H1 (cell line): ENCODE measurements at regions of chr15 and their contacts with region 1.

Region 1: DNA sequence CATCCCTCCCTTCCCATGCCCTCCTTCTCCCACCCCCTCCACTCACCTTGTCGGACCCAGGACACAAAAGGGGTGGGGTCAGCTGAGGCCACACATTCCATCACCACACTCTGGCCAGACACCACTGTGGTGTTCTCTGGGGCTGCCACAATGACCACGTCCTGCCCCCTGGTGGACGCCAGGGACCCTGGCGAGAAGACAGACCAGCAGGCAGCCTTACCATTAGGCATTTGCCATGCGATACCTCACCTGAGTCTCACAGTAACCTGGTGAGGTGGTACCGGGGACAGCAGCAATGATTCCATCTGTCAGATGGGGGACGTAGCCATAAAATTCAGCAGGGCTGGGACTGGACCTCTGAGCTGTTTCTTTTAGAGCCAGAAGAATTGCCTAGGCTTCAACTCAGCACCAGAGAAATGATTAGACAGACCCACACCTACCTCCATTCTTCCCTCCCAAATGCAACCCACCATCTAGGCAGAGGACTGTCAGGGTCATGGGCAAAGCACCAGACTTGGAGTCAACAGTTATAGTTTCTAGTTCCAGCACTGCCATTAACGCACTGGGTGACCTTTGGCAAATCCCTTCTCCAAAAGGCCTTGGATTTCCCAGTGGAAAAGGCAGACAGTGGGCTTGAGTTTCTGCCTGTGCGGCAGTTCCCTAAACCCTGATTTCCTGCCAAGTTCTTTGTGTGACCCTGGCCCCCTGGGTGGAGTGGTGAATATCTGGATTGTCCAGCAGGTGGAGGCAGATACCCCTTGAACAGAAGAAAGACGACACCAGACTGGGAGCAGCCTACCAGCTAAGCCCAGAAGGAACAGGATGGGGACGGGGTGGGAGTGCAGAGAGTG is 21.8 kb downstream of the IGDCC4 start:
- DNase-seq: peak; percentile 78 to 94
- H3K4me3 ChIP-seq: peak overlapping the region in 1 of 4 experiments; percentile 18; a peak in 1 of 8 replicates
- H3K27ac ChIP-seq: no peak overlapping the region
- H3K4me1 ChIP-seq: peaks cover 7 to 30% (median 19%) of the 10 kb centered on the region in 4 experiments
- H3K27me3 ChIP-seq: peaks cover 10 to 24% (median 19%) of the 10 kb centered on the region in 4 experiments
- CTCF ChIP-seq: peak; percentile 91 to 95 (median 91)
- EP300 ChIP-seq: 0 out of 3 replicates have a peak, but pooled peaks of 1 of the 2 experiments have one; percentile 44
- POLR2A ChIP-seq: no peak
- RAD21 ChIP-seq: peak; percentile 94 to 99

Region 2: GRCh38 chr15:65318870-65319356 is 82.1 kb before region 1 on chr15:
- CTCF ChIA-PET with region 1: interaction called, 547 read pairs
- POLR2A ChIA-PET with region 1: interaction called, 4 read pairs
- DNase-seq: peak in 1 of 2 experiments; percentile 90
- H3K4me3 ChIP-seq: no peak overlapping the region
- H3K27ac ChIP-seq: no peak overlapping the region
- H3K4me1 ChIP-seq: no peaks in the 10 kb centered on the region
- H3K27me3 ChIP-seq: 0 out of 7 replicates have a peak, but pooled peaks cover 0 to 3% (median 0%) of the 10 kb centered on the region in 4 experiments
- CTCF ChIP-seq: peak; percentile 62 to 98 (median 92)
- EP300 ChIP-seq: no peak
- POLR2A ChIP-seq: no peak
- RAD21 ChIP-seq: peak; percentile 99 to 100

Region 3: GRCh38 chr15:65377104-65377975 is 23.6 kb before region 1 on chr15:
- CTCF ChIA-PET with region 1: interaction called, 19 read pairs
- POLR2A ChIA-PET with region 1: interaction called, 5 read pairs
- DNase-seq: peak in 1 of 2 experiments; percentile 83
- H3K4me3 ChIP-seq: peak overlapping the region; percentile 58 to 89 (median 80)
- H3K27ac ChIP-seq: no peak overlapping the region
- H3K4me1 ChIP-seq: peaks cover 8 to 25% (median 14%) of the 10 kb centered on the region in 4 experiments
- H3K27me3 ChIP-seq: peaks cover 0 to 20% (median 10%) of the 10 kb centered on the region in 4 experiments; a peak in 5 of 7 replicates
- CTCF ChIP-seq: no peak
- EP300 ChIP-seq: no peak
- POLR2A ChIP-seq: no peak; a peak in 1 of 3 replicates
- RAD21 ChIP-seq: no peak

Region 4: DNA sequence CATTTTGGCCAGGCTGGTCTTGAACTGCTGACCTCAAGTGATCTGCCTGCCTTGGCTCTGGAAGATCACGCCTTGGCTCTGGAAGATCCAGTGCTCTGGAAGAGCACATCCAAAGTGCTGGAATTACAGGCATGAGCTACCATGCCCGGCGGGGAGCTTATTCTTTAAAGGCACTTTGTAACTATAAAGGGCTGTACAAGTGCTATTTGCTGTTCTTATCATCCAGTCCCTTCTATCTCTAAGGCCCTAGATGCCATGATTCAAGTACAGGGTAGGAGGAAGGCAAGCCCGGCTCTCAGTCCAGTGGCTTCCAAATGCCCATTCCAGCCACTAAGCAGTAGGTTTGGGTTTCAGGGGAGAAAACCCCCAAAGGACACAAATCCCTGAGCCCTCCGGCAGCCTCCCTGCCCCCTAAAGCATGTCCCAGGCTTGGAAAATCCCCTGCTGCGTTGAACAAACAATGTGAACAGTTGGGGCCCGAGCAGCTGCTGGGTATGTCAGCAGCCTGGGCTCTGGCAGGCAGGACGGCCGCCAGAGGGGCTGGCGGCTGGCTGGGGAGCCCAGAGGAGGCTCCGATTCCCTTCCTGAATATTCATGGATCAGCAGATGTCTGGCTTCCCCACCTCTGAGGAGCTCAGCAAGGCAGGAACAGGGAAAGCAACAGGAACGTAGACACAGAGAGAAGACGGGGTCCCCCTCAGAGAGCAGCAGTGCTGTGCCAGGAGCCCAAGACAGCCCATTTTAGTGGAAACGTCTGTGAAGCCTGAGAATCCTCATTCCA is 14.0 kb after region 1 on chr15:
- CTCF ChIA-PET with region 1: interaction called, 180 read pairs
- POLR2A ChIA-PET with region 1: interaction called, 229 read pairs
- DNase-seq: peak; percentile 85 to 88
- H3K4me3 ChIP-seq: peak overlapping the region in 2 of 4 experiments; percentile 26 to 38; a peak in 5 of 8 replicates
- H3K27ac ChIP-seq: peak overlapping the region; percentile 82
- H3K4me1 ChIP-seq: peaks cover 40 to 59% (median 50%) of the 10 kb centered on the region in 4 experiments
- H3K27me3 ChIP-seq: no peaks in the 10 kb centered on the region
- CTCF ChIP-seq: peak; percentile 5 to 33 (median 21); a peak in 3 of 4 replicates
- EP300 ChIP-seq: peak in 1 of 2 experiments; percentile 91; a peak in 1 of 3 replicates
- POLR2A ChIP-seq: peak in 1 of 2 experiments; percentile 74; a peak in 2 of 3 replicates
- RAD21 ChIP-seq: peak in 1 of 2 experiments; percentile 51; a peak in 2 of 4 replicates

Region 5: DNA sequence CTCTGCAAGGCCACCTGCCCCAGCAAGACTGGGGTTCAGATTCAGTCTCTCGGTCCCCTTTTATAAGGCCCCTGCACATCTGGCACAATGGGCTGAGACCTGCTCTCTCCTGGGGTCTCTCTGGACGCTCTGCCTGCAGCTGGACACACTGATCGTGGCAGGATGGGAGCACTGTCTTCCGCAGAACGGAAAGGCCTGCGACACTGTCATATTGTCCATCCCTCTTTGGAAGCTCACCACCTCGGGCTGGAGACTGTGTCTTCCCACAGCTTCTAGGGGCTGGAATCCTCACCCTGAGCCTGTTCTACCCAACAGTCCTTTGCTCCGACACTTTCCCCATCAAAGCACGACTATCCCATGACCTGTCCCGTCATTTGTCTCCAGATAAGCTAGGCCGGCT is 33.2 kb after region 1 on chr15:
- CTCF ChIA-PET with region 1: interaction called, 22 read pairs
- POLR2A ChIA-PET with region 1: interaction called, 4 read pairs
- DNase-seq: peak in 1 of 2 experiments; percentile 42
- H3K4me3 ChIP-seq: no peak overlapping the region
- H3K27ac ChIP-seq: no peak overlapping the region
- H3K4me1 ChIP-seq: no peaks in the 10 kb centered on the region
- H3K27me3 ChIP-seq: no peaks in the 10 kb centered on the region
- CTCF ChIP-seq: no peak
- EP300 ChIP-seq: no peak
- POLR2A ChIP-seq: no peak
- RAD21 ChIP-seq: no peak

Region 6: DNA sequence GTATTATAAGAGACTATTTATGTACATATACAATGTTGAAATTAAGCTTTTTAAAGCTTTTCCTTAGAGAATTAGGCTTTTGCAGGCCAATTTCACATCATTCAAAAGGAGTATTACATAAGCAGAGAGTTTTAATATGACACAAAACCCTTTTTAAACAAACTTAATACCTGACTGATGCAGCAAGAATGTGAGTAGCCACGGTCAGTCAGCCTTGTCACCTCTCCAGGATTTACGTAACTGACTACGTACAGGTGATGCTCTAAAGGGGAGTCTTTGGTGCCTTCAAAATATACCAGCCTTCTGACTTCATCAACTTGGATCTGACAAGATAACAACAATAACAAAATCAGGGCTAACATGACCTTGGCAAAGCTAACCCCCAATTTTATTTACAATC is 65.9 kb after region 1 on chr15:
- CTCF ChIA-PET with region 1: interaction called, 21 read pairs
- POLR2A ChIA-PET with region 1: no interaction called
- DNase-seq: no peak
- H3K4me3 ChIP-seq: no peak overlapping the region
- H3K27ac ChIP-seq: no peak overlapping the region
- H3K4me1 ChIP-seq: no peaks in the 10 kb centered on the region
- H3K27me3 ChIP-seq: no peaks in the 10 kb centered on the region
- CTCF ChIP-seq: no peak
- EP300 ChIP-seq: no peak
- POLR2A ChIP-seq: no peak
- RAD21 ChIP-seq: no peak

Region 7: GRCh38 chr15:65516997-65517865 is 116.2 kb after region 1 on chr15 and contains the start of gene DPP8:
- CTCF ChIA-PET with region 1: interaction called, 12 read pairs
- POLR2A ChIA-PET with region 1: interaction called, 3 read pairs
- DNase-seq: peak; percentile 81 to 97
- H3K4me3 ChIP-seq: peak within 1 kb of the TSS; percentile 86 to 98 (median 92)
- H3K27ac ChIP-seq: peak within 1 kb of the TSS; percentile 85; the same call in 1 of the 2 replicates
- H3K4me1 ChIP-seq: peaks cover 1 to 3% (median 2%) of the 10 kb centered on the region in 4 experiments; a peak in 5 of 7 replicates
- H3K27me3 ChIP-seq: no peaks in the 10 kb centered on the region
- CTCF ChIP-seq: peak; percentile 94 to 97 (median 94)
- EP300 ChIP-seq: 0 out of 3 replicates have a peak, but pooled peaks of 1 of the 2 experiments have one; percentile 26
- POLR2A ChIP-seq: peak in 1 of 2 experiments; percentile 95; a peak in 2 of 3 replicates
- RAD21 ChIP-seq: peak; percentile 24 to 34; a peak in 3 of 4 replicates
- total RNA-seq, gene DPP8: 26.0 and 27.2 TPM in 2 replicates

Region 8: DNA sequence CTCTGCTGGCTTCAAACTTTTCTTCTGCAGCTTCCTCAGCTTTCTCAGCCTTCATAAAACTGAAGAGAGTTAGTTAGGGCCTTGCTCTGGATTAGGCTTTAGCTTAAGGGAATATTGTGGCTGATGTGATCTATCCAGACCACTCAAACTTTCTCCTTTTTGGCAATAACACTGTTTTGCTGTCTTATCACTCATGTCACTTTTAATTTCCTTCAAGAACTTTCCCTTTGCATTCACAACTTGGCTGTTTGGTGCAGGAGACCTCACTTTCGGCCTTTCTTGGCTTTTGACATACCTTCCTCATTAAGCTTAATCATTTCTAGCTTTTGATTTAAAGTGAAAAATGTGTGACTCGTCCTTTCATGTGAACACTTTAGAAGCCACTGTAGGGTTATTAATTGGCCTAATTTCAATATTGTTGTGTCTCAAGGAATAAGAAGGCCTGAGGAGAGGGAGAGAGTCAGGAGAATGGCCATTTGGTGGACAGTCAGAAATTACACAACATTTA is 281.5 kb after region 1 on chr15:
- CTCF ChIA-PET with region 1: no interaction called
- POLR2A ChIA-PET with region 1: no interaction called
- DNase-seq: no peak
- H3K4me3 ChIP-seq: no peak overlapping the region
- H3K27ac ChIP-seq: no peak overlapping the region
- H3K4me1 ChIP-seq: no peaks in the 10 kb centered on the region; a peak in 1 of 7 replicates
- H3K27me3 ChIP-seq: no peaks in the 10 kb centered on the region
- CTCF ChIP-seq: no peak
- EP300 ChIP-seq: no peak
- POLR2A ChIP-seq: no peak
- RAD21 ChIP-seq: no peak